Activated T-helper 1 cell treated with anti-CD3 and anti-CD28 coated beads, Interleukin-12 subunit alpha, Interleukin-12 subunit beta, Interleukin-2, Interleukin-4 antibody, amounts not matched to agents 30 ng/mL and 10 ng/mL and 1 ng/mL, durations not matched to agents 14 hours and 24 hours and 36 hours (primary cell): ENCODE measurements at regions of chr20 and their contacts with region 1.

Region 1: DNA sequence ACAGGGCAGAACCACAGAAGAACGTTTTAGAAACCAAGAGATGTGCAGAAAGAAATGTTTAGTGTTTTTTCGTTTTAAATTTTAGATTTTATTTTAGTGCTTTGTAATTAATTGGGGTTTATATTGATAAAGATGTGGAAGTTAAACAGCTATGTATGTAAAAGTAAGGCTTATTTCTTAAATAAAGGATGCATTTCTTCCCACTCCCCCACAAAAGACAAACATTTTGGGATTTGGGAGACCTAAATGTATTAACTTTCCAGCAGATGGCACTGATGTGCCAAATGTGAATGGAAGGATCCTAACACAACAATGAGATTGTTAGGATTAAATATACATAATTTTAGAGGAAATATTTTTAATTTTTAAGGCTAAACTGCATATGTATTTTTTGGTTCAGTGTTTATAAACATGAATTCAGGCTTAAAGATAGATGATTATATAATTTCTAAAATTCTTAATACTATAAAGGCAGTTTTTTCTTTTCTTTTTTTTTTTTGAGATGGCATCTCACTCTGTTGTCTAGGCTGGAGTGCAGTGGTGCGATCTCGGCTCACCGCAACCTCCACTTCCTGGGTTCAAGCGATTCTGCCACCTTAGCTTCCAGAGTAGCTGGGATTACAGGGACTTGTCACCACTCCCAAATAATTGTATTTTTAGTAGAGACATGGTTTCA is 12.0 kb downstream of the PFDN4 start:
- DNase-seq: no peak
- H3K4me3 Mint-ChIP-seq: no peak overlapping the region
- H3K27ac Mint-ChIP-seq: no peak overlapping the region
- H3K4me1 Mint-ChIP-seq: peaks cover 22% of the 10 kb centered on the region
- H3K27me3 Mint-ChIP-seq: no peaks in the 10 kb centered on the region

Region 2: DNA sequence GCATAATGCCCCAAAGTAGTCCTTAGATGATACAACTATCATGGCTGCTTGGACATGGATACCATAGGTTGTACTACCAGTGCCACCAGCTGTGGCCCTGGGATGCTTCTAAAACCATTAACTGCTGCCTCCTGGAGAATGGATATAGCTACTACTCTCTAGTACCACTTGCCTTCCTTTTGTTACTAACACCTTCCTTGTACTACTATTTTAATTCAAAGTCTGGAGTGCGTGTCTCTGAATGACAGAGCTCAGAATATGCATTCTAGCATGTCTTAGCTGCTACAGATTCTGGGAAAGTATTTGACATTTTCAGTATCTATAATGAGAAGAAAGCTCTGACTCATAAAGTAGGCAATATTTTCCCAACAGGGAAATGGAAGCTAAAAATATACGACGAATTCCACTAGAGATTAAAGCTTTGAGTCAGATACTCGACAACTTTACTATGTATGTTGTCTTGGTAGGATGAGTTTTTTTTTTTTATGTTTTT is 100.3 kb after region 1 on chr20:
- intact Hi-C with region 1: loop called (anchors 1 kb)
- DNase-seq: no peak
- H3K4me3 Mint-ChIP-seq: no peak overlapping the region
- H3K27ac Mint-ChIP-seq: peak overlapping the region; percentile 67
- H3K4me1 Mint-ChIP-seq: peaks cover 40% of the 10 kb centered on the region
- H3K27me3 Mint-ChIP-seq: no peaks in the 10 kb centered on the region

Region 3: GRCh38 chr20:54350415-54350814 is 130.5 kb after region 1 on chr20:
- intact Hi-C with region 1: loop called (anchors 5 kb)
- DNase-seq: no peak
- H3K4me3 Mint-ChIP-seq: no peak overlapping the region
- H3K27ac Mint-ChIP-seq: peak overlapping the region; percentile 25
- H3K4me1 Mint-ChIP-seq: peaks cover 43% of the 10 kb centered on the region
- H3K27me3 Mint-ChIP-seq: no peaks in the 10 kb centered on the region

Region 4: GRCh38 chr20:54435015-54435414 is 215.1 kb after region 1 on chr20:
- intact Hi-C with region 1: loop called (anchors 5 kb)
- DNase-seq: no peak
- H3K4me3 Mint-ChIP-seq: no peak overlapping the region
- H3K27ac Mint-ChIP-seq: no peak overlapping the region
- H3K4me1 Mint-ChIP-seq: no peaks in the 10 kb centered on the region
- H3K27me3 Mint-ChIP-seq: no peaks in the 10 kb centered on the region

Region 5: GRCh38 chr20:54649511-54649962 is 429.6 kb after region 1 on chr20:
- intact Hi-C with region 1: loop called (anchors 1 kb)
- DNase-seq: peak; percentile 26
- H3K4me3 Mint-ChIP-seq: no peak overlapping the region
- H3K27ac Mint-ChIP-seq: no peak overlapping the region
- H3K4me1 Mint-ChIP-seq: no peaks in the 10 kb centered on the region
- H3K27me3 Mint-ChIP-seq: peaks cover 6% of the 10 kb centered on the region